Calu3 (cell line): ENCODE measurements at regions of chr4 and their contacts with region 1.

Region 1: GRCh38 chr4:158172261-158173258 is at the start of gene GASK1B:
- DNase-seq: peak; percentile 28
- H3K4me3 Mint-ChIP-seq: peak within 1 kb of the TSS; percentile 48
- H3K27ac Mint-ChIP-seq: peak within 1 kb of the TSS; percentile 63
- H3K4me1 Mint-ChIP-seq: peaks cover 36% of the 10 kb centered on the region
- H3K27me3 Mint-ChIP-seq: no peaks in the 10 kb centered on the region
- CTCF ChIP-seq: no peak
- total RNA-seq, gene GASK1B: 1.4 and 2.3 TPM in 2 replicates

Region 2: GRCh38 chr4:157992038-157992705 is 180.4 kb before region 1 on chr4:
- CTCF ChIA-PET with region 1: interaction called, 3 read pairs
- intact Hi-C with region 1: loop called (anchors 1 kb)
- DNase-seq: peak; percentile 60
- H3K4me3 Mint-ChIP-seq: no peak overlapping the region
- H3K27ac Mint-ChIP-seq: no peak overlapping the region
- H3K4me1 Mint-ChIP-seq: peaks cover 11% of the 10 kb centered on the region
- H3K27me3 Mint-ChIP-seq: no peaks in the 10 kb centered on the region
- CTCF ChIP-seq: peak; percentile 29

Region 3: DNA sequence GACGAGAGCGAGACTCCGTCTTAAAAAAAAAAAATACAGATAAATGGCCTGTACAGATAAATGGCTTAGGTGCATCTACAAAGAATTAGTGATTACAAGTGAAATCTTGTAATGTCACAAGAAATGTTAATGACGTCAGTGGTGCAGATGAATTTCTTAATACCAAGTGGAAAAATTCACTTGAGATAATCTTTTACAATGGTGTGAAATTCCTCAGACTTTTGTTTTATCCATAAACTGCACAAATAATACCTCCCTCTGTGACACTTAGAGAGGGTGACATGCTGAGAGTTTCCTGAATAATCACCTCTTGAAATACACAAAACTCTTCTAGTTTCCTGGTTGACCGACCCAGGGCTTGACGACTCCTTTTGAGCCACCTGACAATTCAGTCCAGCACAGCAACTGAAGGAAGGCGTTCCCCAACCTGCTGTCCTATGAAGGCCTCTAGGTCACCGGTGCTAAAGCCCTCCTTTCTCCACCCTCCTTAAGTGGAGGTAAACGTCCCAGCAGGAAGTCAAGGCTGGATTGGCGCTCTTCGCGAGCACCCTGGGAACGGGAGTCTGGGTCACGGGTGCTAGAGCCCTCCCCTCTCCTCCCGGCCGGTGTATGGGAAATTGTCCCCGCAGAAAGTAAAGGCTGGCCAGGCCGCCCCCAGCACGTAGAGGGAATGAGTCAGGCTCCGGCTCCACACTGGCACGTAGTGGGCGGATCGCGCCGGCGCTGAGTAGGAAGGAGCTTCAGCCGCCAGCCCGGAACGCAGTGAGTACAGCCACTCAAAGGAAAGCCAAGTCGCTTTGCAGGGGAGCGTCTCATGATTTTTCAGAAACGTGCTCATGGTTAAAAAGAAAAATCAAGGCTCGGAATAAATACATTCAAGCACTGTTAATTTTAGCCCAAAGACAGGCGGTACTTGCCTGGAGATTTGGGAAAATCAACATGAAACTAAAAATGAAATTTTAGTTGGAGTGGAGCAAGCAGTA is 37.6 kb after region 1 on chr4 and contains the start of gene TMEM144:
- CTCF ChIA-PET with region 1: no interaction called
- intact Hi-C with region 1: no loop called
- DNase-seq: peak; percentile 87
- H3K4me3 Mint-ChIP-seq: peak within 1 kb of the TSS; percentile 82
- H3K27ac Mint-ChIP-seq: peak within 1 kb of the TSS; percentile 91
- H3K4me1 Mint-ChIP-seq: no peaks in the 10 kb centered on the region
- H3K27me3 Mint-ChIP-seq: no peaks in the 10 kb centered on the region
- CTCF ChIP-seq: no peak
- total RNA-seq, gene TMEM144: 6.0 and 11.8 TPM in 2 replicates

Region 4: GRCh38 chr4:158229768-158230167 is 57.2 kb after region 1 on chr4:
- CTCF ChIA-PET with region 1: no interaction called
- intact Hi-C with region 1: no loop called
- DNase-seq: no peak
- H3K4me3 Mint-ChIP-seq: no peak overlapping the region
- H3K27ac Mint-ChIP-seq: no peak overlapping the region
- H3K4me1 Mint-ChIP-seq: no peaks in the 10 kb centered on the region
- H3K27me3 Mint-ChIP-seq: no peaks in the 10 kb centered on the region
- CTCF ChIP-seq: no peak